Activated CD4-positive, alpha-beta memory T cell treated with anti-CD3 and anti-CD28 coated beads for 36 hours (primary cell): ENCODE measurements at regions of chr14 and their contacts with region 1.

Region 1: DNA sequence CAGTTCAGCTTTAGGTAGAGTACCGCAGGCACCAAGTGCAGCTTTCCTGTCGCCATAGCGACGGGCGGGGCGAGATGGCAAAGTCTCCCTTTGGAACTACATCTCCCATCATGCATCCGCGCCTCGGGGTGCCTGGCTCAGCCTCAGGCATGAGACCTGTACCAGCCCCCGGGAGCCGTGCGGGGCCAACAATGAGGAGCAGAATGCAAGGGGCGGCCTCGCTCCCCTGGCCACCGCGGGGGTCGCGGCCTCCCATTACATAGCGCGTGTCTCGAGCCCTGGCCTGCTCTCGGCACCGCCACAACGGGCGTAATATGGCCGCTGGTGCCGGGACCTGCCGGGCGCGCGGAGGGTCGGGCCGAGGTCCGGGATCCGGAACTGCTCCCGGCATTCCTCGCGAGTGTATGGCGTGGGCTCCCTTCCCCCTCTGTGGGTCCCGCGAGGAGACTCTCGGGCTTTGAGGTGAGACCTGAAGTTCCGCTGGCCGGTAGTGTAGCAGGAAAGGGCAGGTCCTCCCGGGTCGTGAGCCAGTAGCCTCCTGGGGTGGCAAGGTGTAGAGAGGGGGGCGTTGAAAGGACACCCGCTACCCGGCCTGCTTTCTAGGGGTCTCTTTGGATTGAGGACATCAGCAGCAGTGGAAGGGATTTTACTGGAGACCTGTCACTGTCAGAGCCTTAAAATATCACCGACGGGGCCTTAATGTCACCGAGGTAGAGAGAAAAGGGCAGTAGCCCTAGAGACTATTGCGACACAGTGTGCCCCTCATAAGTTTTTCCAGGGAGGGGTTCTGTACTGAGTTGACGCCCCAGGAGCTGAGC is at the start of gene THTPA:
- DNase-seq: peak; percentile 95
- H3K4me3 Mint-ChIP-seq: peak within 1 kb of the TSS; percentile 90
- H3K27ac Mint-ChIP-seq: peak within 1 kb of the TSS; percentile 93
- H3K4me1 Mint-ChIP-seq: peaks cover 40% of the 10 kb centered on the region
- H3K27me3 Mint-ChIP-seq: no peaks in the 10 kb centered on the region
- total RNA-seq, gene THTPA: 7.7 to 8.2 TPM

Region 2: GRCh38 chr14:23286020-23286905 is 269.8 kb before region 1 on chr14 and contains the start of gene HOMEZ:
- CTCF ChIA-PET with region 1: no interaction called
- POLR2A ChIA-PET with region 1: no interaction called
- intact Hi-C with region 1: loop called (anchors 5 kb)
- DNase-seq: peak; percentile 99
- H3K4me3 Mint-ChIP-seq: peak within 1 kb of the TSS; percentile 89
- H3K27ac Mint-ChIP-seq: peak within 1 kb of the TSS; percentile 87
- H3K4me1 Mint-ChIP-seq: peaks cover 25% of the 10 kb centered on the region
- H3K27me3 Mint-ChIP-seq: no peaks in the 10 kb centered on the region
- total RNA-seq, gene HOMEZ: 12.3 to 13.0 TPM

Region 3: DNA sequence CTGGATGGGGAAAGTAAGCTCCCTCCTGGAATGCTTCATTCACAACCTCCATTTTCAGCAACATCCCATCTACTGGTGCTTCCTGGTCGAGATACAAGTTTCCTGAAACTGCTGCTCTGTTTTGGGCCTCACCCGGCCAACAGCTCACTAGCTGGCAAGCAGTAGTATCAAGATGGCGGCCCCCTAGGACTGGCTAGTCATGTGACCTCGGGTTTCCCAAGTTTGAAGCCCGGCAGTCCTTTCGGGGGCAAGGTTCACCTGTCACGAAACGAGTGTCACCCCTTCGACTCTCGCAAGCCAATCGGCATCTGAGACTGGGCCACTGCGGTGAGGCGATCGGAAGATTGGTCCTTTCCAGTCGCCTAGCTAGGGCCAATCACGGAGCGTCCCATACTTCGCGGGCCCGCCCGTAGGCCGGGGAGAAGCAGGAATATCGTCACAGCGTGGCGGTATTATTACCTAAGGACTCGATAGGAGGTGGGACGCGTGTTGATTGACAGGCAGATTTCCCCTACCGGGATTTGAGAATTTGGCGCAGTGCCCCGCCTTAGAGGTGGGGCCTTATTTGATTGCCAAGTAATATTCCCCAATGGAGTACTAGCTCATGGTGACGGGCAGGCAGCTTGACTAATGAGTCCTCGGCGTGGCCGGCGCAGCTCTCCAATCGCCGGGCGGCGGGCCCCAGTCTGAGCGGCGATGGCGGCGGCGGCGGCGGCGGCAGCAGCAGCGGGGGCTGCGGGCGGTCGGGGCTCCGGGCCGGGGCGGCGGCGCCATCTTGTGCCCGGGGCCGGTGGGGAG is 235.1 kb before region 1 on chr14 and contains the start of gene PABPN1:
- CTCF ChIA-PET with region 1: interaction called, 10 read pairs
- POLR2A ChIA-PET with region 1: interaction called, 4 read pairs
- intact Hi-C with region 1: loop called (anchors 2 kb)
- DNase-seq: peak; percentile 99
- H3K4me3 Mint-ChIP-seq: peak within 1 kb of the TSS; percentile 92
- H3K27ac Mint-ChIP-seq: peak within 1 kb of the TSS; percentile 90
- H3K4me1 Mint-ChIP-seq: peaks cover 23% of the 10 kb centered on the region
- H3K27me3 Mint-ChIP-seq: no peaks in the 10 kb centered on the region
- total RNA-seq, gene PABPN1: 198 to 209 TPM

Region 4: DNA sequence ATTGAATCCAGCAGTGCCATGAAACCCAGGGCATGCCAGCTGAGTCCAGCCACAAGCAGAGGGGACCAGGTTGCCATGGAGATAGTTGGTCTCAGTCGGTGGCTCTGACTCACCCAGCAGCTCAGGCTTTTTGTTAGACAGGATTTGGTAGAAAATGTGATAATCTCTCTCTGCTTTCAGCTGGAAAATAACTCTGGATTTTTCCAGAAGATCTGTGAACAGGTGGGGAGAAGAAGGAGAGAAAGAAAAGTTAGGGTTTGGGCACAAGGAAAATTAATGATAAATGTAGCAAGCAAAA is 125.4 kb before region 1 on chr14:
- CTCF ChIA-PET with region 1: no interaction called
- POLR2A ChIA-PET with region 1: no interaction called
- intact Hi-C with region 1: no loop called
- DNase-seq: no peak
- H3K4me3 Mint-ChIP-seq: no peak overlapping the region
- H3K27ac Mint-ChIP-seq: no peak overlapping the region
- H3K4me1 Mint-ChIP-seq: no peaks in the 10 kb centered on the region
- H3K27me3 Mint-ChIP-seq: no peaks in the 10 kb centered on the region

Region 5: GRCh38 chr14:23478111-23478759 is 77.9 kb before region 1 on chr14:
- CTCF ChIA-PET with region 1: interaction called, 223 read pairs
- POLR2A ChIA-PET with region 1: interaction called, 3 read pairs
- intact Hi-C with region 1: no loop called
- DNase-seq: peak; percentile 68
- H3K4me3 Mint-ChIP-seq: no peak overlapping the region
- H3K27ac Mint-ChIP-seq: peak overlapping the region; percentile 31
- H3K4me1 Mint-ChIP-seq: peaks cover 2% of the 10 kb centered on the region
- H3K27me3 Mint-ChIP-seq: no peaks in the 10 kb centered on the region

Region 6: GRCh38 chr14:23567192-23568020 is 11.3 kb after region 1 on chr14 and contains the start of gene AP1G2:
- CTCF ChIA-PET with region 1: interaction called, 63 read pairs
- POLR2A ChIA-PET with region 1: interaction called, 4 read pairs
- intact Hi-C with region 1: loop called (anchors 1 kb)
- DNase-seq: peak; percentile 95
- H3K4me3 Mint-ChIP-seq: peak within 1 kb of the TSS; percentile 91
- H3K27ac Mint-ChIP-seq: peak within 1 kb of the TSS; percentile 90
- H3K4me1 Mint-ChIP-seq: peaks cover 34% of the 10 kb centered on the region
- H3K27me3 Mint-ChIP-seq: no peaks in the 10 kb centered on the region
- total RNA-seq, gene AP1G2: 182 to 190 TPM

Region 7: GRCh38 chr14:23694085-23694975 is 138.2 kb after region 1 on chr14:
- CTCF ChIA-PET with region 1: no interaction called
- POLR2A ChIA-PET with region 1: no interaction called
- intact Hi-C with region 1: no loop called
- DNase-seq: no peak
- H3K4me3 Mint-ChIP-seq: no peak overlapping the region
- H3K27ac Mint-ChIP-seq: no peak overlapping the region
- H3K4me1 Mint-ChIP-seq: no peaks in the 10 kb centered on the region
- H3K27me3 Mint-ChIP-seq: peaks cover 25% of the 10 kb centered on the region

Region 8: DNA sequence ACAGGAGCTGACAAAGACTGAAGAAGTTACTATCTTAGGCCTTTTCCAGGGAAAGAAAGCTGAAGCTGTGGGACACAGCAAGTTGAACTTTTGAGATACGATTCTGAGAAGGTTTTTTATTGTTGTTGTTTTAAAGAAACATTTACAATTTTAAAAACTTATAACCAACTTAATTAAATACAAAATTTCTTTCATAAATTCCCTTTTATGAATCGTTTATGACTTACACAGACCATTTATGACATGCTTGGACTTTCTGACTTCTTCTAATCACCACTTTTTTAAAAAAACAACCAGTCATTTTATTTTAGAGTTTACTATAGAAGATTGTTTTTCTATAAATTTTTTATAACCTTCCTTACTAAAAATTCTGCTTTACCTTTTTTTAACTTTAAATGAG is 148.8 kb after region 1 on chr14:
- CTCF ChIA-PET with region 1: no interaction called
- POLR2A ChIA-PET with region 1: no interaction called
- intact Hi-C with region 1: no loop called
- DNase-seq: no peak
- H3K4me3 Mint-ChIP-seq: no peak overlapping the region
- H3K27ac Mint-ChIP-seq: no peak overlapping the region
- H3K4me1 Mint-ChIP-seq: no peaks in the 10 kb centered on the region
- H3K27me3 Mint-ChIP-seq: peaks cover 8% of the 10 kb centered on the region